Naive thymus-derived CD4-positive, alpha-beta T cell (primary cell): ENCODE measurements at regions of chr11 and their contacts with region 1.

Region 1: DNA sequence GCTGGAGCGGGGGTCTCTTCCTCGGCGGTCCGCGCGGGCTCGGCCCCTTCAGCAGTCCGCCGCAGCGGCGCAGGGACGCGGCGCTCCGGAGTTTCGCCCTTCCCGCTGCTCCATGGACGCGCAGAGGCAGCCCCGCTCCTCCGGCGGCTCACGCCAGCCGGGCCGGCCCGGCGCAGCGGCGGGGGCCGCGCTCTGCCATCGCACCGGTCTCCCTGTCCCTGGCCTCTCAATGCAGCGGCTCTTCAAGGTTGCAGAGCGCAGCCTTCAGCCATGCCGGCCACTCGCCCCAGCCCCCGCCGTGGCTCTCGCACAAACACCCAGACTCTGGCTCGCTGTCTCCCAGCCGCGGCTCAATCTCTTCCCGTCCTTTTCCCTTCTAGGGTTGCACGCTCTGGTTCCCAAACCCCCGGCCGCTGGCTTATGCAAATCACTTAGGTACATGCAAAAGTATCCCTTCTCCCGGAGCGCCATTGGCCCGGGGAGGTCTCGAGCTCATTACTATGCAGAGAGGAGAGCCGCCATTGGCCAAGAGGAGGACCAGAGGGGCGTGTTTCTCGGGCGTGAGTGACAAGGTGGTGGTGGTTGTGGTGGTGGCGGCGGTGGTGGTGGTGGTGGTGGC is at the start of gene LGR4:
- DNase-seq: peak; percentile 33 to 79 (median 70)
- ATAC-seq: peak; percentile 90
- H3K4me3 ChIP-seq: peak within 1 kb of the TSS; percentile 73
- H3K4me3 Mint-ChIP-seq: peak within 1 kb of the TSS; percentile 88 to 98 (median 96)
- H3K27ac ChIP-seq: peak within 1 kb of the TSS; percentile 33
- H3K27ac Mint-ChIP-seq: peak within 1 kb of the TSS; percentile 18 to 90 (median 77)
- H3K4me1 ChIP-seq: peaks cover 4 to 10% of the 10 kb centered on the region in 2 donors
- H3K4me1 Mint-ChIP-seq: peaks cover 6 to 29% (median 21%) of the 10 kb centered on the region in 7 donors
- H3K27me3 ChIP-seq: no peaks in the 10 kb centered on the region
- H3K27me3 Mint-ChIP-seq: peaks cover 0 to 59% (median 7%) of the 10 kb centered on the region in 5 donors
- total RNA-seq, gene LGR4: 0.05 to 1.5 (median 0.95) TPM

Region 2: GRCh38 chr11:27506200-27507182 is 34.0 kb after region 1 on chr11 and contains the start of gene LIN7C:
- CTCF ChIA-PET with region 1: interaction called, 3 read pairs
- POLR2A ChIA-PET with region 1: no interaction called
- intact Hi-C with region 1: loop called (anchors 1 to 2 kb)
- DNase-seq: peak; percentile 69 to 98 (median 90)
- ATAC-seq: peak; percentile 95
- H3K4me3 ChIP-seq: peak within 1 kb of the TSS; percentile 92
- H3K4me3 Mint-ChIP-seq: peak within 1 kb of the TSS; percentile 88 to 100 (median 99)
- H3K27ac ChIP-seq: peak within 1 kb of the TSS; percentile 89
- H3K27ac Mint-ChIP-seq: peak within 1 kb of the TSS; percentile 96 to 100 (median 99)
- H3K4me1 ChIP-seq: peaks cover 18 to 34% of the 10 kb centered on the region in 2 donors
- H3K4me1 Mint-ChIP-seq: peaks cover 32 to 71% (median 61%) of the 10 kb centered on the region in 7 donors
- H3K27me3 ChIP-seq: no peaks in the 10 kb centered on the region
- H3K27me3 Mint-ChIP-seq: no peaks in the 10 kb centered on the region
- total RNA-seq, gene LIN7C: 21.4 to 31.3 (median 25.4) TPM